MCF 10A (cell line): ENCODE measurements at regions of chr14 and their contacts with region 1.

Region 1: DNA sequence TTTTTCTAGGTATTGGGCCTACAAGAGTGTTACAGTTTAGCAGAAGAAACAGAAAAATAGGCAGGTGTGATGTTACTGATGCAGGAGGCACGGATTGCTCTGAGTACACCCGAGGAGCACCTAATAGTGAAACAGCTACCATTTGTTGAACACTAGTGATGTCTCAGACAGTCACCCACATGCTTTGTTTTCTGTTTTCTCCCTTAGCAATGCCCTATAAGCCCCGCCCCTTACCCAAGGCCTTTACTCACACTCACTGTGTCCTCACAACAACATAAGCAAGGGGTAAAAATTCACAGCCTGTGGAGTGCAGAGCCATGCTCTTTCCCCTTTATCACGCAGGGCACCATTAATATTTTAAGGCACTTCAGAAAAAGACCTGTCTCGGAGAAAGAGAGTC is 25.7 kb downstream of the MAPK1IP1L start:
- DNase-seq: peak; percentile 83
- H3K4me3 Mint-ChIP-seq: peak overlapping the region; percentile 70
- H3K27ac Mint-ChIP-seq: peak overlapping the region; percentile 100
- H3K4me1 Mint-ChIP-seq: peaks cover 50% of the 10 kb centered on the region
- H3K27me3 Mint-ChIP-seq: no peaks in the 10 kb centered on the region
- CTCF ChIP-seq: no peak

Region 2: GRCh38 chr14:55107766-55108554 is 30.8 kb after region 1 on chr14:
- CTCF ChIA-PET with region 1: interaction called, 9 read pairs
- POLR2A ChIA-PET with region 1: interaction called, 140 read pairs
- intact Hi-C with region 1: no loop called
- DNase-seq: peak; percentile 95
- H3K4me3 Mint-ChIP-seq: peak overlapping the region; percentile 61
- H3K27ac Mint-ChIP-seq: peak overlapping the region; percentile 99
- H3K4me1 Mint-ChIP-seq: peaks cover 22% of the 10 kb centered on the region
- H3K27me3 Mint-ChIP-seq: no peaks in the 10 kb centered on the region
- CTCF ChIP-seq: no peak

Region 3: DNA sequence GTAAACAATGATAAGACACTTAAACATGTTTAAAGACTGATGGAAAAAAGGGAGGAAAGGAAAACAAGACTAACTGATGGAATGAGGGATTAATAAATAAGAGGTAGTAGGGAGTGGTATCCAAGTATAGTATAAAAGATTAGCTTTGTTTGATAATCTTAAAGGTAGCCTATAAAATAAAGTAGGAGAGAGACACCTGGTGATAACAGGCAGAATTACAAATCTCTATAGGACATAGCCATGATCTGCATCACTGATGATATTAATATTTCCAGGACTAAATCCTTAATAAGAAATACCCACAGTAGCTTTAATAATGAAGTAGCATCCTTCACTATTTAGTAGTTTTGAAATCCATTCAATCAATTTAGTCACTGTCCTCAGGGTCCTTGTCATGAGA is 83.8 kb after region 1 on chr14:
- CTCF ChIA-PET with region 1: interaction called, 12 read pairs
- POLR2A ChIA-PET with region 1: interaction called, 13 read pairs
- intact Hi-C with region 1: no loop called
- DNase-seq: peak; percentile 37
- H3K4me3 Mint-ChIP-seq: no peak overlapping the region
- H3K27ac Mint-ChIP-seq: peak overlapping the region; percentile 14
- H3K4me1 Mint-ChIP-seq: peaks cover 6% of the 10 kb centered on the region
- H3K27me3 Mint-ChIP-seq: no peaks in the 10 kb centered on the region
- CTCF ChIP-seq: peak; percentile 46

Region 4: DNA sequence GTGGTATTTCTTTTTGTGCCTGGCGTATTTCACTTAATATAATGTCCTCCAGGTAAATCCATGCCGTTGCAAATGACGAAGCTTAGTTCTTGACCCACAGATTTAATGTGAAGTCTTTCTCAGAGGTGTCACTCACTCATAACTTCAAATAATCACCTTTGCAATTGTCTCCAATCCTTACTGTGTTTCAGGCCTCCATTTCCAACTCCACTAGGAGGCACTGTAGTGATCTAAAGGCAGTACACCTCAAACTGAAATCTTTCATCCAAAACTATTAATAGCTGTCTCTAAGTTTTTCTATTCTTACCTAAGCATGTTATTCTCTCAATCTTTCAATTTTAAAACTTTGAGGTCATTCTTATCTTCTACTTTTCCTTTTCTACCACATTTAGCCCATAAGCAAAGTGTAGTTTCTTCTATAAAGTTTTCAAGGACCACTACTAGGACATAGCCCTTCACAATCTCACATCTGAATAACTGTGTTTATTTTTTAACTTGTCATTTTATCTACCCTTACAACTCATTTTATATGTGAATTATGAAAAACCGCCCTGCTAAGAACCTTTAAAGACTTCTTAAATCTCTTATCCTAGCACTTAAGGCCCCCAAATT is 168.6 kb after region 1 on chr14:
- CTCF ChIA-PET with region 1: no interaction called
- POLR2A ChIA-PET with region 1: no interaction called
- intact Hi-C with region 1: no loop called
- DNase-seq: peak; percentile 49
- H3K4me3 Mint-ChIP-seq: no peak overlapping the region
- H3K27ac Mint-ChIP-seq: no peak overlapping the region
- H3K4me1 Mint-ChIP-seq: no peaks in the 10 kb centered on the region
- H3K27me3 Mint-ChIP-seq: peaks cover 43% of the 10 kb centered on the region
- CTCF ChIP-seq: peak; percentile 40

Region 5: DNA sequence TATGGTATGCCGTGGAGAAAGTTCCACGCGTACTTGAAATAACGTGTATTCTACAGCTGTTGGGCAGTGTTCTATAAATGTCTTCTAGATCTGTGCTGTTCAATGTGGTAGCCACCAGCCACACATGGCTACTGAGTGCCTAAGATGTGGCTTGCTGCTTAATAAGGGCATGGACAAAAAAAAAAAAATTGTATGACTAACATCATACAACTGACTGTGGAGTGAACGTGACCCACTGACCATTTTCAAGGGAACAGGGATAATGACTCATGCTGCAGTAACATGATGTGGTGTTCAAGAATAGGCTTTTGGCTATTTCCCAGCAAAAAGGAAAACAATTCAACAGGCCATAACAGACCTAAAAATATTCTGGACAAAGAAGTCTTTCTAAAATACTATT is 321.5 kb after region 1 on chr14:
- CTCF ChIA-PET with region 1: no interaction called
- POLR2A ChIA-PET with region 1: no interaction called
- intact Hi-C with region 1: no loop called
- DNase-seq: peak; percentile 94
- H3K4me3 Mint-ChIP-seq: no peak overlapping the region
- H3K27ac Mint-ChIP-seq: peak overlapping the region; percentile 7
- H3K4me1 Mint-ChIP-seq: peaks cover 8% of the 10 kb centered on the region
- H3K27me3 Mint-ChIP-seq: no peaks in the 10 kb centered on the region
- CTCF ChIP-seq: no peak

Region 6: DNA sequence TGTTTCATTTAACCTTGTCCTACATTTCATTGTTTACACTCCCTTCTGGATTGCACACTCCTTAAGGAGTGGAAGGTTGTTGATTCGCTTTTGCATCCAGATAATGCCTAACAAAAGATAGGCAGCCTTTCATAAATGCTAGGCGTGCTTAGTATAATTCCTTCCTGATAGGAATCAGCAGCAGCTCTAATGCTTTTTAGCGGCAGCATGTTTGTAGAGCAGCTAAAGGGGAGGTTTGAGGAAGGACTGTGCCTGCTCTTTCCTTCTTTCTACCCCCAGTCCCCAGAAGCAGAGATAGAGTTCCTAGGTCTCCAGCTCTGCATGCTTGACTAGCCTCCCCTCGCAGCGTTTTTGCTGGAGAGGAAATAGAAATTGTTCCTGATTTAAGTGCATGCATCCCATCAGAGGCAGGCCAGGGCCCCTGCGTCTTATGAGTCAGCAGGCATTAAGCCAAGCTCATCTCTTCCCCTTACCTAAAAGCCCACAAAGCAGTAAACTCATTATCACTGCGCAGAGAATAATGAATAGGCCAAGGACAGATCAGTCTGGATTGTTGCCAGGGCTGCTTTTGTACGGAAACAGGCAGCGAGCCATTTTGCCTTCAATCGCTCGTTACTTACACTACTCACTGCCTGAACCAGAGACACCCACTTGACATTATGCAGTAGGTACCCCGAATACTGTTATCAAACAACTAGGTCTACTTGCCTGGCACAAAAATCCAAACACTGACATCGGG is 377.3 kb after region 1 on chr14:
- CTCF ChIA-PET with region 1: no interaction called
- POLR2A ChIA-PET with region 1: no interaction called
- intact Hi-C with region 1: no loop called
- DNase-seq: peak; percentile 89
- H3K4me3 Mint-ChIP-seq: peak overlapping the region; percentile 21
- H3K27ac Mint-ChIP-seq: no peak overlapping the region
- H3K4me1 Mint-ChIP-seq: peaks cover 42% of the 10 kb centered on the region
- H3K27me3 Mint-ChIP-seq: no peaks in the 10 kb centered on the region
- CTCF ChIP-seq: no peak